Aorta (tissue), 5 donors: ENCODE measurements at regions of chr3 and their contacts with region 1.

Region 1: DNA sequence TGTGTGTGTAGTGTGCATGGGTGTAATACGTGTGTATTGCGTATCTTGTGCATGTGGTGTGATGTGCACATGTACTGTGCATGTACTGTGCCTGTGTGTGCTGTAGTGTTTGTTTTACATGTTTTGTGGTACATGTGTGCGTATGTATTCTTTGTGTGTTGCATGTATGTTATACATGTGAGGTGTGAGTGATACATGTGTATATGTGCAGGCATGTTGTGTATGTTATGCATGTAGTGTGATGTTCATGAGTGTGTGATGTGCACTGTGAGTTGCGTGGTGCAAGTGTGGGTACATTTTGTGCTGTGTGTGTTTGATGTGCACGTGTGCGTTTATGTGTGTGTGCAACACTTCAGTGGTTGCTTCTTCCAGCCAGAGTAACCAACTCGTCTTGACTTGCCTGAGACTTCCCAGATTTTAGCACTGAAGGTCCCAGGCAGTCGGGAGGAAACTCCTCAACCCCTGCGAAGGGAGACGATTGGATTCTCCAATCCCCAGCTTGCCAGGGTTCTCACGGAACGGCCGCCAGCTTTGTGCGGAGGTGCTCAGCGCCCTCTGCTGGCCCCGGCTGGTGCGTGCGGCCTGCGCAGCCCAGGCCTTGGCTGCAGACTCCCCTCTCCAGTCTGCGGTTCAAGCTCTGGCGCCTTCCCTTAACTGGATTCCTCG is 3.6 kb downstream of the GALNT15 start:
- DNase-seq: peak; percentile 90 to 94
- ATAC-seq: peak; percentile 79
- H3K4me3 ChIP-seq: peak overlapping the region in 1 of 2 donors; percentile 20
- H3K27ac ChIP-seq: no peak overlapping the region
- H3K4me1 ChIP-seq: peaks cover 0 to 2% of the 10 kb centered on the region in 2 donors
- H3K27me3 ChIP-seq: no peaks in the 10 kb centered on the region

Region 2: GRCh38 chr3:15629860-15630597 is 548.1 kb before region 1 on chr3:
- intact Hi-C with region 1: loop called in 1 of 2 experiments (anchors 10 kb)
- DNase-seq: peak in 1 of 2 donors; percentile 56
- ATAC-seq: peak; percentile 87
- H3K4me3 ChIP-seq: peak overlapping the region; percentile 30 to 46
- H3K27ac ChIP-seq: no peak overlapping the region
- H3K4me1 ChIP-seq: peaks cover 0 to 3% of the 10 kb centered on the region in 2 donors
- H3K27me3 ChIP-seq: no peaks in the 10 kb centered on the region

Region 3: GRCh38 chr3:15815696-15816095 is 362.4 kb before region 1 on chr3:
- intact Hi-C with region 1: loop called (anchors 5 kb)
- DNase-seq: no peak
- ATAC-seq: no peak
- H3K4me3 ChIP-seq: no peak overlapping the region
- H3K27ac ChIP-seq: no peak overlapping the region
- H3K4me1 ChIP-seq: no peaks in the 10 kb centered on the region
- H3K27me3 ChIP-seq: no peaks in the 10 kb centered on the region

Region 4: GRCh38 chr3:15820911-15821310 is 357.2 kb before region 1 on chr3:
- intact Hi-C with region 1: loop called in 1 of 2 experiments (anchors 5 kb)
- DNase-seq: no peak
- ATAC-seq: no peak
- H3K4me3 ChIP-seq: no peak overlapping the region
- H3K27ac ChIP-seq: no peak overlapping the region
- H3K4me1 ChIP-seq: peaks cover 0 to 9% of the 10 kb centered on the region in 2 donors
- H3K27me3 ChIP-seq: no peaks in the 10 kb centered on the region

Region 5: DNA sequence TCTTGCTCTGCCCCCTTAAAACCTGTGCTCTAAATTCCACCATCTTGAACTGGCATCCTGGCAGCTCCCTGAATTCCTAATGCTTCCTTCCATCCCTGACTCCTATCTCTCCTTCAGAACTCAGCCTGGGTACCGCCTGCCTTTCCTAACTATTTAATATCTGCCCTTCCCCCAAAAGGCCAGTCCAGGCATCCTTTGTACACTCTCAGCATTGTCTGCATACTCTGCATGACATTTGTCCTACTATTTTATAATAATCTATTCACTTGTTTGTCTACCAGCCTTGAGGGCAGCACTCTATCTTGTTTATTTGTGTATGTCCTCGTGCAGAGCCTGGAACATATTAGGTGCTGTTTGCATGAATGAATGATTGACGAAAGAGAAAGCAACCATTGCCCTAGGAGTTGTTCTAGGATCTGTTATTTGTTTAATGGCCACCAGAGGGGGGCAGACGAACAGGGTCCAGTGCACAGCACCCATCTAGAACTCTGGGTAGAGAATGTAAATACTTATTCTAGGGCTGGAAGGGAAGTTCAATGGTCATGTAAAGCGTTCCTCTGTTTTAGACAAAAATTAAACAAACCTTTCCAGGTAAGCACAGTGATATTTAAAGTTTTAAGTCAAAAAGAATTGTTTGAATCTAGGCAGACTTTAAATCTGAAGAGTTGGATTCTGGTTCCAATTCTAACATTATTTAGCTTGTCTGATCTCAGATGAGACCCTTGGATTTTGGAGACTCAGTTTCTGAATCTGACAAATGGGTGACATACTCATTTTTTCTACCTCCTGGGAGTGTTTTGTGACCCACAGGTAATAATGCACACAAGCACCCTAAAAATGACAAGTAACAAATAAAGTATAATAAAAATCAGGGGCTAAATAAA is 129.4 kb before region 1 on chr3:
- intact Hi-C with region 1: loop called (anchors 1 to 2 kb)
- DNase-seq: no peak
- ATAC-seq: peak; percentile 87
- H3K4me3 ChIP-seq: no peak overlapping the region
- H3K27ac ChIP-seq: no peak overlapping the region
- H3K4me1 ChIP-seq: no peaks in the 10 kb centered on the region
- H3K27me3 ChIP-seq: no peaks in the 10 kb centered on the region